OCI-LY7 (cell line): ENCODE measurements at regions of chr15 and their contacts with region 1.

Region 1: DNA sequence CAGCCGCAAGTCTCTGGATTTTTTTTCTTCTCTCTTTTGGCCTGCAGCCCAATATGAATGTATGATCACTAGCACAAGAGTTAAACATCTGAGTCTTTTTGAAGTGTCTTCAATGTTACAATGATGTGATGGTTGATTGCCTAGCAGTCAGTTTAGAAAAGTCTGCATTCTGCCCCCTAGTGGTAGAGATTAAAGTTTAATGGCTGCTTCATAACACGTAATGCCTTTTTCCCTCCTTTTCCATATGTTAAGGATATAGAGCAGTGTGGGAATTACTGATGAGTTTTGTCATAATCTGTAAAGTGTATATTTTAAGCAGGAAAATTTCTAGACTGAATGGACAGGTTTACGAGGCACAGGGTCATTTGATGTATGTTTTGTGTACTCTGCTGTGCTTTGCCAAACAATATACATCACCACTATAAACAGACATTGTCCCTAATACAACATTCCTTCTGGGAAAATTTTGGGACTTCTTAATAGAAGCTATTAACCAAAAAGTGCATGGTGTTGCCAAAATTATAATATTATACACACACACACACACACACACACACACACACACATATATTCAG is 1038.5 kb upstream of the NR2F2 start:
- DNase-seq: peak; percentile 54
- H3K4me3 ChIP-seq: no peak overlapping the region
- H3K27ac ChIP-seq: no peak overlapping the region
- H3K4me1 ChIP-seq: no peaks in the 10 kb centered on the region
- CTCF ChIP-seq: peak; percentile 91

Region 2: DNA sequence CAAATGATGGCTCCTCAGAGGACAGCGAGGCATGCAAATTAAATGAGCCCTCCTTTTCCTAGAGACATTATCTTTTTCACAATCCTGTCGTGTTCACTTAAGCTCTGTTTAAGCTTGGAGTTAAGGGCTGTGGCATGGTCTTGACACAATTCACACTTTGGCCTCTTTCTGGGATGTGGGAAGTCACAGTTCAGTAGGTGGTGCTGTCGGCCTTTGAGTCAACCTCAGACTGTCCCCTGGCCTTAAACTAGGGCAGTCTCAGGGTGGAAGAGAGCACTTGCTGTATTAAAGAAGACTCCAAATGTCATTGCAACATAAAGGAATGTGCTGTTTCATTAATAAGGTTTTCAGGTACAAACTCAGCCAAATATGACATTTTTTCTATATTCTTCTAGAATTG is 709.6 kb before region 1 on chr15:
- CTCF ChIA-PET with region 1: no interaction called
- POLR2A ChIA-PET with region 1: no interaction called
- intact Hi-C with region 1: loop called (anchors 5 kb)
- DNase-seq: peak; percentile 41
- H3K4me3 ChIP-seq: no peak overlapping the region
- H3K27ac ChIP-seq: no peak overlapping the region
- H3K4me1 ChIP-seq: no peaks in the 10 kb centered on the region
- CTCF ChIP-seq: peak; percentile 72

Region 3: DNA sequence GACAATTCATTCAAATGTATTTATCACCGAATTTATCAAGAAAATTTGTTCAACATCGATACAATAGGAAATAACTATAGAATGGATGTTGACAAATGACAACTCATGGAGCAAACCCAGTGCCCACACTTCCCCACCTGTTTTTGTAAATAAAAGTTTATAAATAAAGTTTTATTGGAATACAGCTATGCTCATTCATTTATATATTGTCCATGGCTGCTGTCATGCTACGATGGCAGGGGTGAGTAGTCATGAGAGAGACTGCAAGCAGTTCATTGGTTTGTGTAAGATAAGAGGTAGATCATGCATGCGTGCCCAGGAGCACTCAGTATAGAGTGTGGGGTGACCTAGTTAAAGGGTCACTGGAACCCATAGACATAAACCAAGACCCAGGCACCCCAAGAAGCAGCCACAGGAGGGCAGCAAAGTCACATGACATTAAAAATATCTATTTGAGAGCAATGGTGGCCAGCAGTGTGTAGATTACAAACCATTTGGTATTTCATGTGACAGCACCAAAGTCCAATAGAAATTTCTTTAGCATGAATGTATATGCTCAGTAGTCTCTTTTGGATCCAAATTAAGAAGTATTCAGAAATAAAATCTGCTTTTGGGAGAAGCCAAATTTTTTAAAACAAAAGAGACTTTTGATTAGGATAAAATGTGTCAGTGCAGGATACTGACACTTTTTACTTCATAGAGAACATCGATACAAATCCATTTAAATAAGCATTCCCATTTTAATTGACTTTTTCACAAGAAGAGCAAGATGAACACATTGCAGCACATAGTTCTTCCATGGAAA is 265.9 kb before region 1 on chr15:
- CTCF ChIA-PET with region 1: no interaction called
- POLR2A ChIA-PET with region 1: no interaction called
- intact Hi-C with region 1: loop called (anchors 5 kb)
- DNase-seq: peak; percentile 19
- H3K4me3 ChIP-seq: no peak overlapping the region
- H3K27ac ChIP-seq: no peak overlapping the region
- H3K4me1 ChIP-seq: no peaks in the 10 kb centered on the region
- CTCF ChIP-seq: peak; percentile 70